Sciatic nerve (tissue), 2 donors: ENCODE measurements at regions of chr17 and their contacts with region 1.

Region 1: GRCh38 chr17:62629556-62630364 is 2.3 kb downstream of the MRC2 start:
- DNase-seq: no peak
- ATAC-seq: no peak

Region 2: GRCh38 chr17:62572888-62573401 is 56.8 kb before region 1 on chr17:
- intact Hi-C with region 1: no loop called
- DNase-seq: no peak
- ATAC-seq: no peak

Region 3: DNA sequence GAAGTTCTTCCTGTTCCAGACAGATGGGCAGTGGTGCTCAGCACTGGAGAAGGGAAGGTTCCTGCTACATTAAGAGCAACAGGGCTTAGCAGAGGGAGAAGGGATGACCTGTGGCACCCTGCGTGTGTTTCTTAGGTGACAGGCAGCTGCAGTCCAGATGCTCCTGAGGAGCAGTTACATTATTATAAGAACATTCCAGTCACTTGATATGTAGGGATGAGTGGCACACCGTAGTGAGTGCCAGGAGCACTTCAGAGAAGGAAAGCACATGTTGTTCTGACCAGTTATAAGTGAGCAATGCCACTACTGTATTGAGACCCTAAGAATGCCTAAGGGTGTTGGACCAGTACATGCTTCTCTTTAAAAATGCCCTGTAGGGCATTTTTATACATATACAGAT is 42.2 kb before region 1 on chr17:
- intact Hi-C with region 1: no loop called
- DNase-seq: no peak
- ATAC-seq: no peak

Region 4: GRCh38 chr17:64315032-64315490 is 1685.3 kb after region 1 on chr17:
- intact Hi-C with region 1: loop called (anchors 5 kb)
- DNase-seq: peak; percentile 93
- ATAC-seq: peak; percentile 97